ENCODE measurements at regions of chr12 and their contacts with region 1.

Region 1: GRCh38 chr12:103860903-103861763 is 20.1 kb upstream of the NT5DC3 start:
- DNase-seq: no peak

Region 2: DNA sequence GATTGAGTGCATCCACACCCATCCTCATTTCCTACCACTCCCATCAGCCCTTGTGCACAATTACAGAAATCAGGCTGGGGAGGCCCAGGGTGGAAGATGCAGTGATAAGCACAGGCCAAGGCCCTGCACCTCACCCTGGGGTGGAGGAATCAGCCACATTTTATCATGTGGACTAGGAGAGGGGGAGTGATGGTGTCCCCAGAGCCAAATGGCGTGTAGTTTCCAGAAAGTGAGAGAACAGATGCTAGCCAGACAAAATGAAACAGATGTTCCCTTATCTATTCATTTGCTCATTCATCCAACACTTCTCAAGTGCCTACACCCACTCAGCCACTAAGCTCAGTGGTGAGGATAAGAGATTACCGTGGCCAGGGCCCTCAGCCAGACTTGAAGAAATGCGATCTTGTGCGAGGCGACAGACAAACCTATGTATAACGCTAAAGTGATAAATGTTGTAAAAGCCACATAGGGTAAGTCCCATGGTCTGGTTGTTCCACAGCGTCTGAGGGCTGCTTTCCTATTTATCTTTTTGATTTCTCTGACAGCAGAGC is 180.5 kb before region 1 on chr12:
- intact Hi-C with region 1: no loop called
- DNase-seq: no peak

Region 3: DNA sequence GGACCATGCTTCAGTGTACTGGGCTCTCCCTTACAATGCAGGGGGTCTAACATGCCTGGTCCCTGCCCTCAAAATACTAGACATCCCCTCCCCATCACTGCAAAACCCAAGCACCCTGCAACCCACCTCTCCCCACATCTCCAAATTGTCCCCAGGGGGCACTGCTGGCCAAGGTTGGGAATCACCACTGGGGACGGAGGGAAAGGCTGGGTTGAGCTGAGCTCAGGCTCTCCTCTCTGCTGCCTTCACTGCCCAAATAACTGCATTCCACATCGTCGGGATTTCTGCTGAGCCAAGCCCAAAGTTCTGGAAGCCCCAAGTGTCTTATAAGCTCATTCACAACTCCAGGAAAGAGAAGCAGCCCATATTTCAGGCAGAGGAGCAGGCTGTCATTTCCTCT is 89.7 kb before region 1 on chr12:
- intact Hi-C with region 1: loop called (anchors 10 kb)
- DNase-seq: peak in 39 of 42 donors; percentile 14 to 77 (median 49)

Measured in head of caudate nucleus (tissue), 42 donors.